Activated CD4-positive, alpha-beta memory T cell treated with anti-CD3 and anti-CD28 coated beads for 36 hours (primary cell): ENCODE measurements at regions of chr9 and their contacts with region 1.

Region 1: DNA sequence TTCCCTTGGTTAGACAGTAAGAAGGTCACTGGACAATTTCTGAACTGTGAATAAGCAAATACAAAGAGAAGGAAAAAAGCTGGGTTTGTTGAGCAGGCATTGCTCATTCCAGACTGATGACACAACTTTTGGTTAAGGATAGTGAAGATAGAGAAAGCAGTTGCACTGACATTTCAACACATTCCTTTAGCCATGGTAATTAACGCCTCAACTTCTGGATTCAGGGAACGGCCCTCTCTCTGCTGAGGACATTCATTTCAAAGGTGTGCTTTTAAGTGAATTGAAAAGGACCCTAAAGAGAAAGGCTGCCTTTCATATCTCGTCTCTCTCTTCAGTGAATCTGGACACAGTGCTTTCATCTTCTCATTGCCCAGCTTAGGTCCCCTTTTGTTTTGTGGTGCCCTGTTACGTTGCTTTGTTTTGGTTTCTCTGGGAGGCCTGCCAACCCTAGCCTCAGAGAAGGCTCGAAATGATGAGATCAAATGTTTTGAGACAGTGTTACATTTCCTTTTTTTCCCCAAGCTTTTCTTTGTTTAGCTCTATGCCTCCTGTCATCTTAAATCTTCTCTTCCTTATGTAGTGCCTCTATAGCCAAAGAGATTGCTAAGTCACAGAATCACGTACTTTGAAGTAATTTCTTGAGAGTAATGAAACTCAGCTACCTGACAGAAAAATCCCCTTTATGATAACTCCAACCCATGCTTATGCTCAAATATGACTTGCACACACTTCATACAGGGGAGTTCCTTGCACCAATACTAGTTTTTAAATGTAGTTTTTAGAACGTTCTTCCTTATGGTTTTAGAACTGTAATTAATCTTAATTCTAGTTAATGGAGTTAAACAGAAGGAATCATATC is 94.4 kb upstream of the IFNE start:
- DNase-seq: peak; percentile 71
- H3K4me3 Mint-ChIP-seq: no peak overlapping the region
- H3K27ac Mint-ChIP-seq: peak overlapping the region; percentile 8
- H3K4me1 Mint-ChIP-seq: peaks cover 32% of the 10 kb centered on the region
- H3K27me3 Mint-ChIP-seq: peaks cover 3% of the 10 kb centered on the region

Region 2: GRCh38 chr9:21281275-21281674 is 295.3 kb before region 1 on chr9:
- CTCF ChIA-PET with region 1: no interaction called
- POLR2A ChIA-PET with region 1: no interaction called
- intact Hi-C with region 1: no loop called
- DNase-seq: no peak
- H3K4me3 Mint-ChIP-seq: no peak overlapping the region
- H3K27ac Mint-ChIP-seq: no peak overlapping the region
- H3K4me1 Mint-ChIP-seq: no peaks in the 10 kb centered on the region
- H3K27me3 Mint-ChIP-seq: peaks cover 10% of the 10 kb centered on the region

Region 3: GRCh38 chr9:21334701-21335632 is 241.6 kb before region 1 on chr9 and contains the start of gene KLHL9:
- CTCF ChIA-PET with region 1: no interaction called
- POLR2A ChIA-PET with region 1: no interaction called
- intact Hi-C with region 1: loop called (anchors 5 kb)
- DNase-seq: peak; percentile 92
- H3K4me3 Mint-ChIP-seq: peak within 1 kb of the TSS; percentile 86
- H3K27ac Mint-ChIP-seq: peak within 1 kb of the TSS; percentile 87
- H3K4me1 Mint-ChIP-seq: peaks cover 50% of the 10 kb centered on the region
- H3K27me3 Mint-ChIP-seq: no peaks in the 10 kb centered on the region
- total RNA-seq, gene KLHL9: 15.9 to 16.0 TPM

Region 4: DNA sequence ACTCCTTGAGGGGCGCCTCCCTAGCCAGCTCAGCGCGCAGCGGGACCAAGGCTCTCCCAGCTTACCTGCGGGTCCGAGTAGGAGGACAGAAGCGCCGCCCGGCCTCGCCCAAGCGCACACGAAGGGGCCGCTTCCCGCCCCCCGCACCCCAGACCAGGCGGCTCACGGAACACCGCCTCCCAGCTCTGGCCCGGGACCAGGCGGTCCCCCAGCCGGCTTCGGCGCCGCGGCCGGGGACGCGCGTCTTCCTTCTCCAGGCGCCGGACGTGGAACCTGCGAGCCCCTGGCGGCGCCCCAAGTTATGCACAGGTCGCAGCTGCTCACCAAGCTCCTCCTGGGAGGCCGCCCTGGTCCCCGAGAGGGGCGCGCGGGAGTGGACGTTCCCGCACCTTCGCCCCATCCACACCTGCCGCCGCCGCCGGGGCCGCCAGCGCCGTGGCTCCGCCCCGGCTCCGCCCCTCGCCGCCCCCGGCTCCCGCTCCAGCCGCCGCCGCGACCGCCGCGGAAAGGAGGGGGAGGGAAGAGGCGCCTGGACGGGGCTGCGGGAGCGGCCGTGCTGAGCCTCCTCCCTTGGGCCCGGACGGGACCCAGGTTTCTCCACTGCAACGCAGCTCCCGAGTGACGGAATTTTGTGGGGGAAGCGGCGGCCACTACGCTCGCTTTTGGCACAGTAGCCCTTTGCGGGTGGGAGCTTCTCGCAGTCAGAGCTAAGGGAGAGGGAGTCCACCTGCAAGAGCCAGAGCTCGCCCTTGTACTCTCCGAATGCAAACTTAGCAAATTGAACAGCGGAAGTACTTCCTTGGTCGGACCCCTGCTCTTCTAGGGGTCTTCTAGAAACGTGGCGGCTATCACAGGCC is 16.9 kb before region 1 on chr9:
- CTCF ChIA-PET with region 1: interaction called, 12 read pairs
- POLR2A ChIA-PET with region 1: no interaction called
- intact Hi-C with region 1: loop called (anchors 2 kb)
- DNase-seq: peak; percentile 54
- H3K4me3 Mint-ChIP-seq: peak overlapping the region; percentile 85
- H3K27ac Mint-ChIP-seq: no peak overlapping the region
- H3K4me1 Mint-ChIP-seq: peaks cover 27% of the 10 kb centered on the region
- H3K27me3 Mint-ChIP-seq: peaks cover 37% of the 10 kb centered on the region

Region 5: DNA sequence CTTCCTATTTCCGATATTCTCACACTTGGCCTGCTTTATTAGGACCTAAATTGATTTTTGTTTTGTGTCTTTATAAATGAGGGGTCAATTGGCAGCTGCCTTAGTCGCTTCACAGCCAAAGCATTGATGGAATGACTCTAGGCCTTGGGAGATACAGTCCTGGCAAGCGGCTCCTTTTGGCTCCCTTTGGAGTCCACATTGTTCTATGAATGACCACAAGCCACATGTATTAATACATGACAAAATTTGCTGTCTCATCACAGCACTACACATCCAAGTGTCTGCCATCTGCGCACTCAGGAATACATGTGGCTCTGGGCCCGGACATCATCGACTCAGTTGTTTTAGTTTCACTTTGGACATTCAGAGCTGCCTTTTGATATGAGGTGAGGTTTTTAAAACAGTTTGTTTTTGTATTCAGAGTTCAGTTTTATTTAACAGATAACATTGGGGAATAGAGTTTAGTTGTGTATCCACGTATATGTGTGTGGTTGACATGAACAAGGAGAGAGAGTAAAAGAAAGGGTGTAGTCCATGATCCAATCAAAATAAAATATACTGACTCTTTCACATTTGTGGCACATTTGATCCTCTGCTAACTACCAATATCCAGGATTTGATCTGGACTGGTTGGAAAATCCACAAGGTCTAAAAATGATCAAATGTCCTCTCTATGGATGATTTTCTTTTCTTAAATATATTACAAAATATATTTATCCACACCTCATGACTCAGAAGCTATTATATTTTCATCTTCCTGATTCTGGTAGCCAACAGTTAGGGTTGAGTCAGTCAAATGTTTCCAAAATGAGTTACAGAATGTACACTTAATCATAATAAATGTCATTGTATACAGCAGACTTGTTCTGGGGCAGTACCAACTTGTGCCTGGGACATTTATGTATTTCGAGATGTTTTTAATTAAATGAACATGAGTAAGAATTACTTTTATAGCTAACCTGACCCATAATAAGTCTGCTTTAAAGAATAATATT is 111.8 kb after region 1 on chr9:
- CTCF ChIA-PET with region 1: no interaction called
- POLR2A ChIA-PET with region 1: no interaction called
- intact Hi-C with region 1: loop called (anchors 1 kb)
- DNase-seq: no peak
- H3K4me3 Mint-ChIP-seq: no peak overlapping the region
- H3K27ac Mint-ChIP-seq: no peak overlapping the region
- H3K4me1 Mint-ChIP-seq: peaks cover 40% of the 10 kb centered on the region
- H3K27me3 Mint-ChIP-seq: no peaks in the 10 kb centered on the region

Region 6: DNA sequence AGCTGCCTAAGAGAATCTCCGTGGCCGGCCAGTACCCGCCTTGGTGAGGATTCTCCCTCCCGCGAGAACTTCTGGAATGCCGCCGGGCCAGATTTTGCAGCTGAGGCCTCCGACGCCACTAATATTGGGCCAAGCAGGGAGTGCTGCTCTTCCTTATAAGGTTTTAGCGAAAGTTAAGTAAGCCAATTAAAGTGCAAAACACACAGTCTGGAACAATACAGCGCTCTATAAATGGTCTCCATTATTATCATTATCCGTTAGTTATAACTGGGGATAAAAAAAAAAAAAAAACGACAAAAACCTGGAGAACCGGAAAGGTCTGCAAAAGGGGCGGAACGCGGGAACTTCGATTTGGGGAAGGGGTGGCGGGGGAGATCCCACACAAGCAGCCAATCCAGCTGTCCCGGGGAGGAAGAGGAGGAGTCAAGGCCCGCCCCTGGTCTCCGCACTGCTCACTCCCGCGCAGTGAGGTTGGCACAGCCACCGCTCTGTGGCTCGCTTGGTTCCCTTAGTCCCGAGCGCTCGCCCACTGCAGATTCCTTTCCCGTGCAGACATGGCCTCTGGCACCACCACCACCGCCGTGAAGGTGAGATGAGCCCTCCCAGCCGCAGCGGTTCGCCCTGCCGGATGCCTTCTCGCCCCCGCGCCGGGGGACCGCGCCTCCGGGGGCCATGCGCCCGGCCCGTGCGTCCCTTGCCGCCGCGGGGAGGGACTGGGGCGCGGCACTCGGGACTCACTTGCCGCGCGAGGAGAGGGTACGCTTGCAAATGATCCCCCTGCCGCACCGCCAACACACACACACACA is 225.8 kb after region 1 on chr9 and contains the start of gene MTAP:
- CTCF ChIA-PET with region 1: interaction called, 3 read pairs
- POLR2A ChIA-PET with region 1: no interaction called
- intact Hi-C with region 1: loop called (anchors 5 kb)
- DNase-seq: peak; percentile 83
- H3K4me3 Mint-ChIP-seq: peak within 1 kb of the TSS; percentile 98
- H3K27ac Mint-ChIP-seq: peak within 1 kb of the TSS; percentile 99
- H3K4me1 Mint-ChIP-seq: peaks cover 39% of the 10 kb centered on the region
- H3K27me3 Mint-ChIP-seq: peaks cover 7% of the 10 kb centered on the region
- total RNA-seq, gene MTAP: 55.6 to 62.3 TPM

Region 7: GRCh38 chr9:22079873-22080341 is 503.3 kb after region 1 on chr9:
- CTCF ChIA-PET with region 1: no interaction called
- POLR2A ChIA-PET with region 1: no interaction called
- intact Hi-C with region 1: loop called (anchors 1 kb)
- DNase-seq: peak; percentile 76
- H3K4me3 Mint-ChIP-seq: peak overlapping the region; percentile 24
- H3K27ac Mint-ChIP-seq: peak overlapping the region; percentile 42
- H3K4me1 Mint-ChIP-seq: peaks cover 43% of the 10 kb centered on the region
- H3K27me3 Mint-ChIP-seq: peaks cover 52% of the 10 kb centered on the region